Mammary epithelial cell (primary cell): ENCODE measurements at regions of chr1 and their contacts with region 1.

Region 1: GRCh38 chr1:51569284-51570062 is 47.4 kb upstream of the OSBPL9 start:
- DNase-seq: peak; percentile 94
- H3K4me3 ChIP-seq: no peak overlapping the region
- H3K27ac ChIP-seq: peak overlapping the region; percentile 61
- H3K4me1 ChIP-seq: peaks cover 49% of the 10 kb centered on the region
- H3K27me3 ChIP-seq: no peaks in the 10 kb centered on the region
- CTCF ChIP-seq: peak in 1 of 2 donors; percentile 37

Region 2: GRCh38 chr1:50553921-50554320 is 1015.6 kb before region 1 on chr1:
- CTCF ChIA-PET with region 1: no interaction called
- dilution Hi-C with region 1: no loop called
- in situ Hi-C with region 1: no loop called
- intact Hi-C with region 1: no loop called
- DNase-seq: no peak
- H3K4me3 ChIP-seq: no peak overlapping the region
- H3K27ac ChIP-seq: no peak overlapping the region
- H3K4me1 ChIP-seq: no peaks in the 10 kb centered on the region
- H3K27me3 ChIP-seq: no peaks in the 10 kb centered on the region
- CTCF ChIP-seq: no peak

Region 3: GRCh38 chr1:51519048-51519864 is 50.2 kb before region 1 on chr1 and contains the start of gene EPS15:
- CTCF ChIA-PET with region 1: no interaction called
- dilution Hi-C with region 1: no loop called
- in situ Hi-C with region 1: no loop called
- intact Hi-C with region 1: loop called (anchors 5 kb)
- DNase-seq: peak; percentile 84
- H3K4me3 ChIP-seq: peak within 1 kb of the TSS; percentile 72 to 89 (median 79)
- H3K27ac ChIP-seq: peak within 1 kb of the TSS; percentile 84
- H3K4me1 ChIP-seq: peaks cover 10% of the 10 kb centered on the region
- H3K27me3 ChIP-seq: no peaks in the 10 kb centered on the region
- CTCF ChIP-seq: no peak
- total RNA-seq, gene EPS15: 48.0 to 52.3 TPM

Region 4: GRCh38 chr1:51627678-51628077 is 58.2 kb after region 1 on chr1:
- CTCF ChIA-PET with region 1: interaction called, 18 read pairs
- dilution Hi-C with region 1: no loop called
- in situ Hi-C with region 1: no loop called
- intact Hi-C with region 1: no loop called
- DNase-seq: peak; percentile 52
- H3K4me3 ChIP-seq: no peak overlapping the region
- H3K27ac ChIP-seq: no peak overlapping the region
- H3K4me1 ChIP-seq: peaks cover 9% of the 10 kb centered on the region
- H3K27me3 ChIP-seq: no peaks in the 10 kb centered on the region
- CTCF ChIP-seq: peak; percentile 36 to 63

Region 5: GRCh38 chr1:51638350-51638749 is 68.9 kb after region 1 on chr1:
- CTCF ChIA-PET with region 1: no interaction called
- dilution Hi-C with region 1: no loop called
- in situ Hi-C with region 1: no loop called
- intact Hi-C with region 1: no loop called
- DNase-seq: no peak
- H3K4me3 ChIP-seq: no peak overlapping the region
- H3K27ac ChIP-seq: peak overlapping the region; percentile 23
- H3K4me1 ChIP-seq: peaks cover 43% of the 10 kb centered on the region
- H3K27me3 ChIP-seq: no peaks in the 10 kb centered on the region
- CTCF ChIP-seq: no peak

Region 6: DNA sequence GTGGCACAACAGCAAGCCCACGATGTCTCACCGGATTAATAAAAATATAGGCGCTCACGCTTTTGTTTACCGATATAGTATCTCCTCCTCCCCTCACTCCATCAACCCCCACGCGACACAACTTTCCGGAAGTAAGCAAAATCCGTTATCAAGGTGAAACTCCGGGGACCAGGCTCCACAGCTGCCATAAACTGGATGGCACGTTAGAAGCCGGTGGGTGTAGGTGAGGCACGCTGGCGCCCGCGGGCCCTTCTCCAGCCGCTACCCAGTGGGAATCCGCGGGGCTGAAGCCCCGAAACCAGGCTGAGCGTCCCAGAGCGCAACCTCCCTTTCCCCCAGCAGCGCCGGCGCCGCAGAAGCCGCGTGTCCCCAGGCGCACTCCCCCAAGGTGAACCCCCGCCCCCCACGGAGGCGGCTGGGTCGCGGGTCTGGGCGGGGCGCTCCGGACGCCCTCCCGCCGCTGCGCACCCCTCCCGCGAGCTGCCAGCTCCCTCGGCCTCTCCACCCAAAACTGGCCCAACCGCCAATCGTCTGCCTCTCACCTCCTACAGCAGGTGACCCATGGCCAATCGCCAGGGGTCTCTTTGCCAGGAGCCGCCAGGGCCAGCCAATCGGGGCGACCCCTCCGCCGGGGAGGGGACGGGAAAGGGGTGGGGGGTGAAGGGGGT is 159.8 kb after region 1 on chr1:
- CTCF ChIA-PET with region 1: no interaction called
- dilution Hi-C with region 1: no loop called
- in situ Hi-C with region 1: no loop called
- intact Hi-C with region 1: loop called (anchors 1 kb)
- DNase-seq: peak; percentile 95
- H3K4me3 ChIP-seq: peak overlapping the region; percentile 84 to 97 (median 87)
- H3K27ac ChIP-seq: peak overlapping the region; percentile 70
- H3K4me1 ChIP-seq: peaks cover 9% of the 10 kb centered on the region
- H3K27me3 ChIP-seq: no peaks in the 10 kb centered on the region
- CTCF ChIP-seq: no peak

Region 7: DNA sequence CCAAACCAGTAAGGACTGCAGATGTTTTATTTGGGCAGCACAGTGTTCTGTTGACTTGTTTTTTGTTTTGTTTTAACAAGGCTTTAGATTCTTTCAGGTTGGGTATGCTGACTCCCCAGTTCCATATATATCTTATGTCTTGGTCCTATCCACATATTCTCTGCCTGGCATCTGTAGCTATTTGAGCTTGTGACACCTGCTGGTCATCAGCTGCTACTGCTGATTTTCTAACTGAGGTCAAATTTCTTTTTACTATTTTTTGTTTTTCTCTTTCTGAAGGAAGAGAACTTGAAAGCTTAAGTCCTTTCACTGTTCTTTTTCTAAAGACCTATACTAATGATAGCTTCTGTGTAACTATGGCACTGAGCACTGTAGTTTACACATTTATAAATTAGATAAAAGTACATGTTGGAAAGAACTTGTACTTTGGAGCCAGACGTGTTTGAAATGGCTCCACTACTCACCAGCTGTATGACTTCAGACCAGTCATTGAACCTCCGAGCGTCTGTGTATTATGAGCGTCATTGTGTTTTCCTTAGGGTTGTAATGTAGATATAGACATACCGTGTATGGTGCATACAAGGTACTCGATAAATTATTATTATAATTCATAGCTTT is 199.6 kb after region 1 on chr1:
- CTCF ChIA-PET with region 1: interaction called, 8 read pairs
- dilution Hi-C with region 1: no loop called
- in situ Hi-C with region 1: no loop called
- intact Hi-C with region 1: loop called (anchors 1 kb)
- DNase-seq: peak; percentile 37
- H3K4me3 ChIP-seq: no peak overlapping the region
- H3K27ac ChIP-seq: no peak overlapping the region
- H3K4me1 ChIP-seq: no peaks in the 10 kb centered on the region
- H3K27me3 ChIP-seq: no peaks in the 10 kb centered on the region
- CTCF ChIP-seq: peak; percentile 73 to 78